ENCODE measurements at regions of chr18 and their contacts with region 1.

Region 1: GRCh38 chr18:47930931-47931717 is 665 bp upstream of the SMAD2 start:
- DNase-seq: peak; percentile 97
- ATAC-seq: peak; percentile 79
- H3K4me3 ChIP-seq: peak overlapping the region; percentile 56 to 91 (median 64)
- H3K4me3 Mint-ChIP-seq: peak overlapping the region; percentile 85
- H3K27ac ChIP-seq: peak overlapping the region; percentile 91 to 94
- H3K27ac Mint-ChIP-seq: peak overlapping the region; percentile 85
- H3K4me1 ChIP-seq: peaks cover 22 to 23% of the 10 kb centered on the region in 2 donors
- H3K4me1 Mint-ChIP-seq: peaks cover 37% of the 10 kb centered on the region
- H3K27me3 ChIP-seq: no peaks in the 10 kb centered on the region
- H3K27me3 Mint-ChIP-seq: peaks cover 6% of the 10 kb centered on the region
- CTCF ChIP-seq: no peak

Region 2: DNA sequence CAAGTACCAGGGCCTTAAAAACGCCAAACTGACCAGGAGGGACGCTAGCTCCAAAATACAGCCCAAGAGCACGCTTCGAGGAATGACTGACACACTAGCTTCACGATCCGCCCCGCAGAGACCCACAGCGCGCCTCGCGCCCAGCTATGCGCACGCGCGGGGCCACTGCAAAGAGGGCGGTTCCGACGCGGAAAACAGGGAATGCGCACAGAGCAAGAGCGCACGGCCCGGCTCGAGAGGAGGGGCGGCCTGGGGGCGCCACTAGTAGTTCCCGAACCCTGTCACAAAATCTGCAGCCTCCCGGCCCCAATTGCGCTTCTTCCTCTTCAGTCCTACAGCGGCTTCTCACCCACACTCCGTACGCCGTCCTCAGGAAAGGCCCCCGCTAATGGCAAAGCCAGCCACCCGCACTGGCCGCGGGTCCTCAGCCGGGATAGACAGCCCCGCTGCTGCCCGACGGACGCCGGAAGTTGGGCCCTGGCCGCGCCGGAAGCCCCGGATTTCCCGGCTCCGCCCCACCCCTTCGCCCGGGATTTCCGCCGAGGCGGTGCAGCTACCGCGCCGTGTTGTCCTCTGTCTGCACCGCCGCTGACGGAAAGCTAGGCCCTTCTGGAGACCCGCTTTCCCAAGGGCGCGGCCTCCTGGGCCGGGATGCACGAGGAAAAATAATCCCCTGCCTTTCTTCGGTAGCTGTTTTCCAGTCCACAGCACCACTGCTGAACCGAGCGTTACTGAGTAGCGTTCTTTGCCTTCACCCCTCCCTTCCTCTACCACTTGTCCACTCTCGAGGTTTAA is 780.9 kb before region 1 on chr18 and contains the start of gene HDHD2:
- CTCF ChIA-PET with region 1: no interaction called
- POLR2A ChIA-PET with region 1: no interaction called
- intact Hi-C with region 1: loop called (anchors 10 kb)
- DNase-seq: peak; percentile 73
- ATAC-seq: peak; percentile 77
- H3K4me3 ChIP-seq: peak within 1 kb of the TSS; percentile 73 to 97 (median 87)
- H3K4me3 Mint-ChIP-seq: peak within 1 kb of the TSS; percentile 95
- H3K27ac ChIP-seq: peak within 1 kb of the TSS; percentile 48 to 89
- H3K27ac Mint-ChIP-seq: peak within 1 kb of the TSS; percentile 92
- H3K4me1 ChIP-seq: peaks cover 14 to 15% of the 10 kb centered on the region in 2 donors
- H3K4me1 Mint-ChIP-seq: peaks cover 35% of the 10 kb centered on the region
- H3K27me3 ChIP-seq: no peaks in the 10 kb centered on the region
- H3K27me3 Mint-ChIP-seq: no peaks in the 10 kb centered on the region
- CTCF ChIP-seq: no peak
- total RNA-seq, gene HDHD2: 43.9 and 45.5 TPM in 2 replicates

Region 3: DNA sequence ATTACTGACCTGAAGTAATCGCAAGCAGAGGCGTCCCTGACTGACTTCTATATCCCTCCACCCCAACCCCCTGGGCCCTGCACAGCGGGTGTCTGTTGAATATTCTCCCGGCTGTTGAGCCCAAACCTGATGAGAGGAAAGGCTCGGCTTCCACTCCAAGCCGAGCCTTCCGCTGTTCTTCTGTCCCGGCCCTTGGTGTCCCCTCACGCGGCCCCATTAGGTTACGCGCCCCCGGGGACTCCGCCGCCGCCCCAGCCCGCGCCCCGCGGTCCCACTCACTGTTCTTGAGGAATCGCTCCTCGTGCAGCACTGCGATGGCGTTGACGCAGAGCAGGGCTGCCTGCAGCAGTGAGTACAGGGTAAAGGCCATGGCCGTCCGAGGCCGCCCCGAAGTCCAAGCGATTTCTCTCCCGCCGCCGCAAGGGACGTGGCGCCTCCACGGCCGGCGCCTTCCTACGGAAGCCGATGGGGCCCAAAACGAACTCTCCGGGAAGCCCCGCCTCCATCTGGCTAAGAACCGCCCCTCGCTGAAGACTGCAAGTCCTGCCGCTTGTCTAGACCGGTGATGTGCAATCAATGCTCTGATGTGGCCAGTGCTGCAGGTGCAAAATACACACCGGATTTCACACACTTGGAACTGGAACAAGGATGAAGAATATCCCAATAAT is 755.1 kb before region 1 on chr18 and contains the start of gene IER3IP1:
- CTCF ChIA-PET with region 1: no interaction called
- POLR2A ChIA-PET with region 1: no interaction called
- intact Hi-C with region 1: loop called (anchors 1 kb)
- DNase-seq: peak; percentile 92
- ATAC-seq: peak; percentile 97
- H3K4me3 ChIP-seq: peak within 1 kb of the TSS; percentile 74 to 95 (median 91)
- H3K4me3 Mint-ChIP-seq: peak within 1 kb of the TSS; percentile 26
- H3K27ac ChIP-seq: peak within 1 kb of the TSS in 1 of 2 donors; percentile 67
- H3K27ac Mint-ChIP-seq: peak within 1 kb of the TSS; percentile 86
- H3K4me1 ChIP-seq: peaks cover 14 to 15% of the 10 kb centered on the region in 2 donors
- H3K4me1 Mint-ChIP-seq: peaks cover 7% of the 10 kb centered on the region
- H3K27me3 ChIP-seq: peaks cover 0 to 6% (median 0%) of the 10 kb centered on the region in 4 experiments
- H3K27me3 Mint-ChIP-seq: peaks cover 3% of the 10 kb centered on the region
- CTCF ChIP-seq: no peak
- total RNA-seq, gene IER3IP1: 8.2 and 8.7 TPM in 2 replicates

Region 4: GRCh38 chr18:47953471-47953931 is 22.4 kb after region 1 on chr18:
- CTCF ChIA-PET with region 1: interaction called, 4 read pairs
- POLR2A ChIA-PET with region 1: interaction called, 4 read pairs
- intact Hi-C with region 1: loop called (anchors 1 kb)
- DNase-seq: peak; percentile 58
- ATAC-seq: peak; percentile 92
- H3K4me3 ChIP-seq: peak overlapping the region in 2 of 5 experiments; percentile 0 to 37
- H3K4me3 Mint-ChIP-seq: peak overlapping the region; percentile 70
- H3K27ac ChIP-seq: no peak overlapping the region
- H3K27ac Mint-ChIP-seq: peak overlapping the region; percentile 33
- H3K4me1 ChIP-seq: peaks cover 15 to 19% of the 10 kb centered on the region in 2 donors
- H3K4me1 Mint-ChIP-seq: peaks cover 16% of the 10 kb centered on the region
- H3K27me3 ChIP-seq: peaks cover 0 to 23% (median 18%) of the 10 kb centered on the region in 4 experiments
- H3K27me3 Mint-ChIP-seq: peaks cover 32% of the 10 kb centered on the region
- CTCF ChIP-seq: no peak

Region 5: GRCh38 chr18:47970664-47971531 is 39.8 kb after region 1 on chr18:
- CTCF ChIA-PET with region 1: no interaction called
- POLR2A ChIA-PET with region 1: interaction called, 10 read pairs
- intact Hi-C with region 1: loop called (anchors 5 kb)
- DNase-seq: peak; percentile 73
- ATAC-seq: peak; percentile 84
- H3K4me3 ChIP-seq: no peak overlapping the region
- H3K4me3 Mint-ChIP-seq: no peak overlapping the region
- H3K27ac ChIP-seq: no peak overlapping the region
- H3K27ac Mint-ChIP-seq: peak overlapping the region; percentile 29
- H3K4me1 ChIP-seq: peaks cover 14 to 18% of the 10 kb centered on the region in 2 donors
- H3K4me1 Mint-ChIP-seq: peaks cover 23% of the 10 kb centered on the region
- H3K27me3 ChIP-seq: peaks cover 0 to 19% (median 13%) of the 10 kb centered on the region in 4 experiments
- H3K27me3 Mint-ChIP-seq: peaks cover 54% of the 10 kb centered on the region
- CTCF ChIP-seq: no peak

Region 6: DNA sequence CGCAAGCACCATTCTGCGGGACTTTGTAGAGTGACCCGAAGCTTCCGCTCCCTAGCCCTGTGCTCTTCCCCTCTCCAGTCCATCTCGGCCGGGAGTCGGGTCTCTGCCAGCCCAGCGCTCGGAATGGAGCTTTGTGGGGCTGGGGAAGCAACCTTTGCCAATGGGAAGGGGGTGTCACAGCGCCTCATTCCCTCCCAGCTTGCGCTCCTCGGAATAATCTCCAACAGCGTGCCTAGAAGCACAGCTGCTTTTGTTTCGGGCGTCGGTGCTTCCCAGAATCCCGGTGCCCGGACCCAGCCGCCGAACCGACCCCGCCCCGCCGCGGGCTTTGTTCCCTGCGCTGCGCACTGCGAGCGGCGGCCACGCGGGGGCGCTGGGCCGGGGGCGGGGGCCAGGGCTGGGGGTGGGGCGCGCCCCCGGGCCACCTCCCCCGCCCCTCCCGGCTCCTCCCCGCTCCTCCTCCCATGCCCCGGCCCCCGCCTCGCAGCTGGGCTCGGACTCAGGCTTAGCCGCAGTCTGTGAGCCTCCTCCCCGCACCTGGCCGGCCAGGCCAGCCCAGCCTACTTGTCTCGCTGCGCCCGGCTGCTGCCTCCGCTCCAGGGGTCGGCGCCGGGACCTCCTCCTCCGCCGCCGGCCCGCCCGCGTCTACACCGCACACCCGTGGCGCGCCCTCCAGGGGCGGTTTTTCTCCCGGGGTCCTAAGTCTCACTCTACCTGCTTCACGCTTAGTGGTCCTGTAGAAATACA is 77.0 kb after region 1 on chr18:
- CTCF ChIA-PET with region 1: no interaction called
- POLR2A ChIA-PET with region 1: no interaction called
- intact Hi-C with region 1: loop called (anchors 2 kb)
- DNase-seq: peak; percentile 53
- ATAC-seq: peak; percentile 87
- H3K4me3 ChIP-seq: peak overlapping the region in 4 of 5 experiments; percentile 23 to 60 (median 34)
- H3K4me3 Mint-ChIP-seq: peak overlapping the region; percentile 77
- H3K27ac ChIP-seq: no peak overlapping the region
- H3K27ac Mint-ChIP-seq: no peak overlapping the region
- H3K4me1 ChIP-seq: peaks cover 9 to 20% of the 10 kb centered on the region in 2 donors
- H3K4me1 Mint-ChIP-seq: peaks cover 7% of the 10 kb centered on the region
- H3K27me3 ChIP-seq: peaks cover 0 to 31% (median 16%) of the 10 kb centered on the region in 4 experiments
- H3K27me3 Mint-ChIP-seq: peaks cover 45% of the 10 kb centered on the region
- CTCF ChIP-seq: peak; percentile 71

Region 7: GRCh38 chr18:48022531-48023329 is 91.6 kb after region 1 on chr18:
- CTCF ChIA-PET with region 1: interaction called, 3 read pairs
- POLR2A ChIA-PET with region 1: no interaction called
- intact Hi-C with region 1: loop called (anchors 1 kb)
- DNase-seq: peak; percentile 56
- ATAC-seq: peak; percentile 17
- H3K4me3 ChIP-seq: no peak overlapping the region
- H3K4me3 Mint-ChIP-seq: no peak overlapping the region
- H3K27ac ChIP-seq: no peak overlapping the region
- H3K27ac Mint-ChIP-seq: no peak overlapping the region
- H3K4me1 ChIP-seq: no peaks in the 10 kb centered on the region
- H3K4me1 Mint-ChIP-seq: no peaks in the 10 kb centered on the region
- H3K27me3 ChIP-seq: peaks cover 0 to 16% (median 7%) of the 10 kb centered on the region in 4 experiments
- H3K27me3 Mint-ChIP-seq: peaks cover 47% of the 10 kb centered on the region
- CTCF ChIP-seq: peak; percentile 55

Region 8: GRCh38 chr18:48085781-48086487 is 154.8 kb after region 1 on chr18:
- CTCF ChIA-PET with region 1: no interaction called
- POLR2A ChIA-PET with region 1: no interaction called
- intact Hi-C with region 1: no loop called
- DNase-seq: no peak
- ATAC-seq: no peak
- H3K4me3 ChIP-seq: no peak overlapping the region
- H3K4me3 Mint-ChIP-seq: no peak overlapping the region
- H3K27ac ChIP-seq: no peak overlapping the region
- H3K27ac Mint-ChIP-seq: no peak overlapping the region
- H3K4me1 ChIP-seq: no peaks in the 10 kb centered on the region
- H3K4me1 Mint-ChIP-seq: no peaks in the 10 kb centered on the region
- H3K27me3 ChIP-seq: no peaks in the 10 kb centered on the region
- H3K27me3 Mint-ChIP-seq: peaks cover 7% of the 10 kb centered on the region
- CTCF ChIP-seq: no peak